Gastrocnemius medialis (tissue), 4 donors: ENCODE measurements at regions of chr15 and their contacts with region 1.

Region 1: DNA sequence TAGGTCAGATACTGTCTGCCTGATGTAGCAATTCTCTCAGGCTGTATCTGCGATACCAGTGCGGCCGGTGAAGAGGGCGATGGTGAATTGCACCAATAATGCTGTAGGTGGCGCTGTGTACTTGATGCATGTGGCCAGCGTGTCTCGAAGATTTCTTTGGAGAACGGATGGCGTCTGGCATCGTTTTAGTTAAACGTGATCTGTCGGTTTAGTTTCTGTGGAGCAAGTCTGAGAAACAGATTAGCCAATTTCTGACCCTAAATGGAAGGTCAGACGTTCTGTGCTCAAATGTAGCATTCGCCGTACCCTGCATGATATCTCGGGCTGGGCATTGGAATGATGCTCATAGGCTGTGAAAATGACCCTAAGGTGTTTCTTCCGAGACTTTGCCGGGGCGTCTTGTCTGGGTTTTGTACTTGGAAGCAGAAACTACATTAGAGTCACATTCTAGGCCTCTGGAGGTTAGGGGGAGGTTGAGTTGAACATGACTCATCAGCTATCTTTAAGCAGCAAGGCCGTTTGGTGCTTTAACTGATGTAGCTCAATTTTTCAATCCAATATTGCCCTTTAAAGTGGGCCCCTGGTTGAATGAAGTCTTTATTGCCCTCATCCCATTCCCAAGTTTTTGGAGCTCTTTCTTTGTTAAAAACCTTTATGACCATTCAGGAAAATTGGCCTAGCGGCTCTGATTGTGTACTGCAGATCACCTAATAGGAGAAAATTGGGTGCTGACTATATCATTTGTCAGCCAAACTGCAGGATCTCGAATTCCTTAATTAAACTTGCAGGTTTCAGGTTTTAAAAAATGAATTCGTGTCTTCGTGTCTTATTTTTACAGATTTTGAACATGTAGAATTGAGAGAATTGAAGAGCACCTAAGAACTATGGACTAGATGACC is 80.0 kb downstream of the SQOR start:
- DNase-seq: no peak
- ATAC-seq: peak; percentile 47 to 61
- H3K4me3 ChIP-seq: no peak overlapping the region
- H3K27ac ChIP-seq: no peak overlapping the region
- H3K4me1 ChIP-seq: peaks cover 0 to 3% of the 10 kb centered on the region in 2 donors
- H3K27me3 ChIP-seq: no peaks in the 10 kb centered on the region
- CTCF ChIP-seq: peak; percentile 39 to 81 (median 68)
- POLR2A ChIP-seq: no peak

Region 2: DNA sequence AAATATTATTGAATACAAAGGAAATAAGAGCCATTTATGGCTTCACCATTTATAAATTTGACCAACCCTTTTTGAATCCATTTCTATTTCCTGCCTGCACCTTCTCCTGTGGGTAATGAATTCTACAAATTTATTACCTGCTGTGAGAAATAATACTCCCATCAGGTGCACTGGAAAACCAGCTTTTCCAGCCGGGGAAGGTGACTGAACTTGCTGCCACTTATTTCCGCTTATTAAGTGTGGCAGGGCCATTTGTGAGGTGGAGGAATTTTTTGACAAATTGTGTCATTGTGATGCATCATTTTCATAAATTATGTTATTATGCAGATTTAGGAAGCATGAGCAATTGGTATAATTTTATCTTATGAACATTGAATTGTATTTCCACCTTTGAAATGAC is 71.1 kb after region 1 on chr15:
- in situ Hi-C with region 1: no loop called
- intact Hi-C with region 1: loop called (anchors 5 kb)
- DNase-seq: no peak
- ATAC-seq: no peak
- H3K4me3 ChIP-seq: no peak overlapping the region
- H3K27ac ChIP-seq: no peak overlapping the region
- H3K4me1 ChIP-seq: no peaks in the 10 kb centered on the region
- H3K27me3 ChIP-seq: no peaks in the 10 kb centered on the region
- CTCF ChIP-seq: no peak
- POLR2A ChIP-seq: no peak

Region 3: GRCh38 chr15:46856839-46857502 is 1142.1 kb after region 1 on chr15:
- in situ Hi-C with region 1: no loop called
- intact Hi-C with region 1: no loop called
- DNase-seq: no peak
- ATAC-seq: no peak
- H3K4me3 ChIP-seq: no peak overlapping the region
- H3K27ac ChIP-seq: no peak overlapping the region
- H3K4me1 ChIP-seq: no peaks in the 10 kb centered on the region
- H3K27me3 ChIP-seq: no peaks in the 10 kb centered on the region
- CTCF ChIP-seq: no peak
- POLR2A ChIP-seq: no peak